Activated CD4-positive, alpha-beta memory T cell treated with anti-CD3 and anti-CD28 coated beads for 36 hours (primary cell): ENCODE measurements at regions of chr17 and their contacts with region 1.

Region 1: DNA sequence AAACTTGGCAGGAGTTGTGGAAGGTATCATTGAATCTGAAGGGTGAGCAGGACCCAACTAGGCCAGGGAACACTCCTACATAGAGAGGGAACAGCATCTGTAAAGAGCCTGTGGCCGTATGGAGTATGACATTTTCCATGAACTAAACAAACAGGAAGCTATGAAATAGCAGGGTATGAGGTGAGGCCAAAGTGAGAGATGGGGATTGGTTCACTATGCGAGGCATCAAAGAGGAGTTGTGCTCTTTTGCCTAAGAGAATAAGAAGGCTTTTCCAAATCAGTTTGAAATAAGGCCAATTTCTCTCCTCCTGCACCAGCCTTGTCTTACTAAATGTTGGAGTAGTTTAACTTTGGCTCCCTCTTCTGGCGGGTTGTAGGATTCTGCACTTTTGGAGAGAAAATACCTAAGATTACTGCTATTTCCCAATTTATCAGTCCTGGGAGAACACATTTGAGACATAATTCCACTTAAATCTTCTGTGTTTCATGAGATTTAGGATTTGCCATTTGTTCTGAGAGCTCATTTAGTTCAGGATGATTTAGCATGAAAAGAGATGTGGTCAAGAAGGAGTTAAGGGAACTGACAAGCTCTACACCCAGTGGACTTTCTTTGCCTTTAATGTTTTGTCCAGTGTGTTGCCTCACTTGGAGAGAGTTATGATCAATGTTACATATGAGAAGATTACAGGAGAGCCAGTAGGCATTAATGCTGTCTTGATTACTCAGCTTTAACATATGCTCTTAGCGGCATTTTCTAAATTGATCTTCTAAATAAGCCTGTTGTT is 55.4 kb downstream of the TNRC6C start:
- DNase-seq: peak; percentile 50
- H3K4me3 Mint-ChIP-seq: no peak overlapping the region
- H3K27ac Mint-ChIP-seq: no peak overlapping the region
- H3K4me1 Mint-ChIP-seq: peaks cover 20% of the 10 kb centered on the region
- H3K27me3 Mint-ChIP-seq: no peaks in the 10 kb centered on the region

Region 2: DNA sequence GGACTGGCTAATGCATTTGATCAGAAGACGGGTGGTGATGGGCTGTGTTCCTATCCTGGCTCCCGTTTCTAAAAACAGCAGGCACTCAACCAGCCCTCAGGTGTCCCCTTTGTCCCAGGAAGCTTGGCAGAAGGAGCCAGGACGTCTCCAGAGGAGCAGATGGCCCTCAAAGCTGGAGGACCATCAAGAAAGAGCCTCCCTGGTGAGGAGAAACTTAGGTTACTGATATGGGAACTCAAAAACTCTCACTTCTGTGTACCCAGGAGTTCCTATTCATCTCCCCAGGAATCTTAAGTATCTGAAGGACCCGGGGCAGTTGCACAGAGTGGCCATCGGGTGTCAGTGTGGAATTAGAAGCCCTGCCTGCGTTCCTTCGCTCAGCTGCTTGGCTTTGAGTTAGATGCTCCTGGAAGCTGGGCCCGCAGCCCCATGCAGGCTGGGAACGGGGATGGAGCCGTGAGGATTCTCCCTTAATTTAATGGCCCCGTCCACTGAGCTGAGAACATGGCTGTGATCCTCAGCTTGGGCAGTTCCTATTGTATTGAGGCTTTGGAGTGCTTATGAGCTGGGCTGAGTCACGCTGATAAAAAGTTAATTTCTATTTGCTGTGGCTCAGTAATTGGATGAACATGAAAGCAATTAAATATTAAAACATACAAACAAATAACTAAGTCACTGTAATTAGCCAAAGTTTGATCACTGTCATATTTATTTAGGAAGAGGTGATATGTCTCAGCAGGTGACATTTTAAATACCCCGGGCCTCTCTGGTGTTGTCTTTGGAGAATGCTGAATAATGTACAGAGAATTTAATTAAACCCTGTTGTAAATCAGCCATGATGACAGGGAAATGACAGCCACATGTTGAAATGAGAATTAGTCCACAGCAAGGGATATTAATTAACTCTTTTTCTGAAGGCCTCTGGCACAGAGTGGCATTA is 471.1 kb before region 1 on chr17:
- CTCF ChIA-PET with region 1: interaction called, 99 read pairs
- POLR2A ChIA-PET with region 1: no interaction called
- intact Hi-C with region 1: loop called (anchors 5 kb)
- DNase-seq: peak; percentile 76
- H3K4me3 Mint-ChIP-seq: no peak overlapping the region
- H3K27ac Mint-ChIP-seq: no peak overlapping the region
- H3K4me1 Mint-ChIP-seq: no peaks in the 10 kb centered on the region
- H3K27me3 Mint-ChIP-seq: peaks cover 9% of the 10 kb centered on the region

Region 3: DNA sequence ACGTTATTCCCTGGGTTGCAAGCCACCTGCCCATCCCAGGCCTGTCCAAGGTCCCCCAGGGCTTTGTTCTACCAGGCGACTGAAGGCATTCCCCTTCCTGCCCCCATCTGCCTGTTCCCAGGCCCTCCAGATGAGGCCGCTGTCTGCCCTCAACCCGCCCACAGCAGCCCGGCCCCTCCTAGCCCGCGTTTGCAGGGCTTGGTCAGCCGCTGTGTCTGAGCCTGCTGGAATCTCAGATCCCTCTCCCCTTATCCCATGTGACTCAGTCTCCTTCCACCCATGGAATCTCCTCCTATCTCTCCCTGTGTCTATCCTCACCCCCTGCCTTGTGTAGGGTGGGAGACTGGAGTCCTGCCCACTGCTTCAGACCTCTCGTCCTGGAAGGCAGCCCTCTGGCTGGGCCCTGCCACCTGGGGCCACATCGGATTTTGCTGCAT is 241.4 kb before region 1 on chr17:
- CTCF ChIA-PET with region 1: interaction called, 15 read pairs
- POLR2A ChIA-PET with region 1: no interaction called
- intact Hi-C with region 1: loop called (anchors 1 kb)
- DNase-seq: peak; percentile 81
- H3K4me3 Mint-ChIP-seq: no peak overlapping the region
- H3K27ac Mint-ChIP-seq: no peak overlapping the region
- H3K4me1 Mint-ChIP-seq: peaks cover 9% of the 10 kb centered on the region
- H3K27me3 Mint-ChIP-seq: no peaks in the 10 kb centered on the region

Region 4: GRCh38 chr17:77892469-77893143 is 121.3 kb before region 1 on chr17:
- CTCF ChIA-PET with region 1: interaction called, 13 read pairs
- POLR2A ChIA-PET with region 1: no interaction called
- intact Hi-C with region 1: no loop called
- DNase-seq: peak; percentile 29
- H3K4me3 Mint-ChIP-seq: no peak overlapping the region
- H3K27ac Mint-ChIP-seq: no peak overlapping the region
- H3K4me1 Mint-ChIP-seq: peaks cover 6% of the 10 kb centered on the region
- H3K27me3 Mint-ChIP-seq: peaks cover 3% of the 10 kb centered on the region

Region 5: GRCh38 chr17:77944390-77945222 is 69.3 kb before region 1 on chr17:
- CTCF ChIA-PET with region 1: no interaction called
- POLR2A ChIA-PET with region 1: no interaction called
- intact Hi-C with region 1: no loop called
- DNase-seq: no peak
- H3K4me3 Mint-ChIP-seq: no peak overlapping the region
- H3K27ac Mint-ChIP-seq: no peak overlapping the region
- H3K4me1 Mint-ChIP-seq: no peaks in the 10 kb centered on the region
- H3K27me3 Mint-ChIP-seq: peaks cover 3% of the 10 kb centered on the region

Region 6: DNA sequence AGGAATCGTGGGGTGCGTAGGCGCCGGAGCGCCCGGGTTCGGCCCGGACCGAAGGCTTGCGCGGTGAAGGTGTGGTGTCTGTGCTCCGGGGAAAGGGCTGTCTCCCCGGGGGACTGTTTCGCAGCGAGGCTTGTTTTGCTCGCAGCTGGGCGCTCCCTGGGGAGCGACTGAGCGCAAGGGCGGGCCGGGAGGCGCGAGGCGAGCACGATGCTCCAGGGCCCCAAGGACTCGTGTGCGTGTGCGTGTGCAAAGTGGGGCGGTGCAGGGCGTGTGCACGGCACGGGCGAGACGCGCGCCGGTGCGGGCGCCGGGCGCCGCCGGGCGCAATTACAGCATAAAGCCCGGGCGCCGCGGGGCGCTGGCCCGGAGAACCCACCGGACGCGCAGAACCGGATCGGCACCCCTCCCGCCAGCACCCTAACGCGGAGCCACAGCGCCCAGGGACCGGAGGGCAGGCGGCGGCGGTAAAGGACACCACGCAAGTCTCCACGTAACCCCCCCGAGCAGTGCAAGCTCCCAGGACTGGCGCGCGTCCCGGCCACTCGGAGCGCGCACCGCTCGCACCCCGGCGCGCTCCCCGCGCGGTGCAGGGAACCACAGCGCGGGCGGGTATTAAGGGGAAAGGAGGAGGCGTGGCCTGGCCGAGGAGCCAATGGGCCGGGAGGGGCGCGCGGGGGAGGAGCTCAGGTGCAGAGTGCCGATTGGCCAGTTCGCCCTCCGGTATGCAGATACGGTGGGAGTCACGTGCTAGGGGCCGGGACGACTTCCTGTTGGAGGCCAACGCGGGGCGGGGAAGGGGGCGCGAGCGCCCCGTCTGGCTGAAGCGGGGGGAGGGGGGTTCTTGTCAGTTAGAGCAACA is 55.8 kb before region 1 on chr17 and contains the start of gene TNRC6C:
- CTCF ChIA-PET with region 1: interaction called, 15 read pairs
- POLR2A ChIA-PET with region 1: interaction called, 9 read pairs
- intact Hi-C with region 1: loop called (anchors 5 kb)
- DNase-seq: peak; percentile 100
- H3K4me3 Mint-ChIP-seq: peak within 1 kb of the TSS; percentile 94
- H3K27ac Mint-ChIP-seq: peak within 1 kb of the TSS; percentile 82
- H3K4me1 Mint-ChIP-seq: peaks cover 36% of the 10 kb centered on the region
- H3K27me3 Mint-ChIP-seq: no peaks in the 10 kb centered on the region
- total RNA-seq, gene TNRC6C: 10.9 to 15.6 TPM

Region 7: DNA sequence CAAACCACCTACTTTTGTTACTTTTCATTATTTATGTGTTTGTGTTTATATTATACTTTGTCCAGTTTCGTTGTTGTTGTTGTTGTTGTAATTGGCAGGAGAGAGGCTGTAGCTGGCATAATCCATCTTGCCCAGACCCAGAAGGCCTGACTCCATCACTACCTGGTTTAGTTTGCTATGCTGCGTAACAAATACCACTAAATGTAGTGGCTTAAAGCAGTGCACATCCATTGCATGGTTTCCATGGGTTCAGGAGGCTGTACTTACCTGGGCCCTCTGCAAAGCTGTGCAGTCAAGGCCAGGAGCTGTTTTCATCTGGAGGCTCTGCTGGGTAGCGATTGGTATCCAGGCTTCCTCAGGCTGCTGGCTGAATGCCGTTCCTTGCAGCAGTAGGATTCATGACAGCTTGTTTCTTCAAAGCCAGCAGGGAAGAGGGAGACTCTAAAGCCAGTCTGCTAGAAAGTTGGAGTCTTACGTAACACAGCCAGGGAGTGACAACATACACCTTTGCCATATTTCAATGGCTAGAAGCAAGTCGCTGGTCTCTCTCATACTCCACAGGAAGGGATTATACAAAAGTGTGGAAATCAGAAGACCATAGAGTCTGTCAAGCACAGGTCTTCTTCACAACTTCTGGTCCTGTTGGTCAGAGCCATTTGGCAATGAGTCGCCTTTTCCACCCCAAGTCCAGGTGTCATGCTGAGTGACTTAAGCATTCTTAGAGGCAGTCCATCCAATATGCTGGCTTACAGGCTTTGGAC is 14.3 kb before region 1 on chr17:
- CTCF ChIA-PET with region 1: interaction called, 42 read pairs
- POLR2A ChIA-PET with region 1: interaction called, 3 read pairs
- intact Hi-C with region 1: no loop called
- DNase-seq: peak; percentile 45
- H3K4me3 Mint-ChIP-seq: no peak overlapping the region
- H3K27ac Mint-ChIP-seq: no peak overlapping the region
- H3K4me1 Mint-ChIP-seq: peaks cover 67% of the 10 kb centered on the region
- H3K27me3 Mint-ChIP-seq: no peaks in the 10 kb centered on the region